CD8-positive, alpha-beta T cell (primary cell): ENCODE measurements at regions of chr14 and their contacts with region 1.

Region 1: GRCh38 chr14:102591889-102592763 is at the start of gene RCOR1:
- DNase-seq: peak; percentile 96 to 99 (median 98)
- ATAC-seq: peak; percentile 89
- H3K4me3 ChIP-seq: peak within 1 kb of the TSS; percentile 59 to 94
- H3K4me3 Mint-ChIP-seq: peak within 1 kb of the TSS; percentile 89
- H3K27ac ChIP-seq: peak within 1 kb of the TSS; percentile 89 to 91
- H3K27ac Mint-ChIP-seq: peak within 1 kb of the TSS; percentile 94
- H3K4me1 ChIP-seq: peaks cover 18% of the 10 kb centered on the region
- H3K4me1 Mint-ChIP-seq: peaks cover 30% of the 10 kb centered on the region
- H3K27me3 ChIP-seq: no peaks in the 10 kb centered on the region
- H3K27me3 Mint-ChIP-seq: no peaks in the 10 kb centered on the region
- CTCF ChIP-seq: no peak
- total RNA-seq, gene RCOR1: 31.7 to 34.4 TPM

Region 2: DNA sequence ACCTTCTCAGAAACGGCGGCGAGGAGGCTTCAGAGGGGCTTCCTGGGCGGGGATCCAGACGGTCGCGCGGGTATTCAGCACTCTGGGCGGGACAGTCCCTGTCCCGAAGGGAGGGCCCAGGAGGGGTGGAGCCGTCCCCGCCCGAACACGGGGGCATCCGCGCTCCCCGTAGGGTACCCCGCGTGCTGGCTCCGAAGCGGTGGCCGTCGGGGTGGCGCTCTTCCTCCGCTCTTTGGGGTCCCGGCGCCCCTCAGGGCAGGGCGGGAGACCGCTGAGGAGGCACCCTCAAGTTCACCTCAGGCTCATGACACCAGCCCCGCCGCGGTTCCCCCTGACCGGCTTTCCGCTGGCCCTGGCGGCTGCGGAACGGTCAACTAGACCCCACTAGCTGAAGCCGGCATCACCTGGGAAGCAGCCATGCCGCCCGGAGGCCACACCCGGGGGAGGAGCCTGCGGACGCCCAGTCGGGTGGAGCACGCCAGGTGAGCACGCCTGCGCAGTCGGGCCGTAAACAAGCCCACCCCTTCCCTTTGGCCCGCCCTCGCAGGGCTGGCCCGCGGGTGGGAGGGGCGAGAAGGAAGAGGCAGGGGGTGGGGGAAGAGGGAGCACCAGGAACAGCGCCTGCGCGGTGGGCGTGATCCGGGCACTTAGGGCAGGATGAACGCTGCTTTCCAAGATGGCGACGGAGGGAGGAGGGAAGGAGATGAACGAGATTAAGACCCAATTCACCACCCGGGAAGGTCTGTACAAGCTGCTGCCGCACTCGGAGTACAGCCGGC is 452.7 kb before region 1 on chr14 and contains the start of gene WDR20:
- CTCF ChIA-PET with region 1: no interaction called
- POLR2A ChIA-PET with region 1: no interaction called
- intact Hi-C with region 1: loop called in 1 of 2 experiments (anchors 10 kb)
- DNase-seq: peak; percentile 98 to 100 (median 99)
- ATAC-seq: peak; percentile 96
- H3K4me3 ChIP-seq: peak within 1 kb of the TSS; percentile 94 to 95
- H3K4me3 Mint-ChIP-seq: peak within 1 kb of the TSS; percentile 99
- H3K27ac ChIP-seq: peak within 1 kb of the TSS; percentile 87 to 91
- H3K27ac Mint-ChIP-seq: peak within 1 kb of the TSS; percentile 98
- H3K4me1 ChIP-seq: peaks cover 25% of the 10 kb centered on the region
- H3K4me1 Mint-ChIP-seq: peaks cover 29% of the 10 kb centered on the region
- H3K27me3 ChIP-seq: no peaks in the 10 kb centered on the region
- H3K27me3 Mint-ChIP-seq: no peaks in the 10 kb centered on the region
- CTCF ChIP-seq: no peak
- total RNA-seq, gene WDR20: 40.8 to 46.3 TPM

Region 3: GRCh38 chr14:102421411-102422053 is 170.6 kb before region 1 on chr14:
- CTCF ChIA-PET with region 1: no interaction called
- POLR2A ChIA-PET with region 1: no interaction called
- intact Hi-C with region 1: no loop called
- DNase-seq: no peak
- ATAC-seq: no peak
- H3K4me3 ChIP-seq: no peak overlapping the region
- H3K4me3 Mint-ChIP-seq: no peak overlapping the region
- H3K27ac ChIP-seq: no peak overlapping the region
- H3K27ac Mint-ChIP-seq: no peak overlapping the region
- H3K4me1 ChIP-seq: no peaks in the 10 kb centered on the region
- H3K4me1 Mint-ChIP-seq: no peaks in the 10 kb centered on the region
- H3K27me3 ChIP-seq: no peaks in the 10 kb centered on the region
- H3K27me3 Mint-ChIP-seq: no peaks in the 10 kb centered on the region
- CTCF ChIP-seq: no peak

Region 4: GRCh38 chr14:102509744-102510615 is 82.1 kb before region 1 on chr14 and contains the start of gene ANKRD9:
- CTCF ChIA-PET with region 1: interaction called, 3 read pairs
- POLR2A ChIA-PET with region 1: no interaction called
- intact Hi-C with region 1: loop called in 1 of 2 experiments (anchors 1 kb)
- DNase-seq: peak; percentile 57 to 91 (median 83)
- ATAC-seq: peak; percentile 86
- H3K4me3 ChIP-seq: peak within 1 kb of the TSS; percentile 78 to 96
- H3K4me3 Mint-ChIP-seq: peak within 1 kb of the TSS; percentile 86
- H3K27ac ChIP-seq: peak within 1 kb of the TSS; percentile 48 to 50
- H3K27ac Mint-ChIP-seq: peak within 1 kb of the TSS; percentile 64
- H3K4me1 ChIP-seq: peaks cover 16% of the 10 kb centered on the region
- H3K4me1 Mint-ChIP-seq: peaks cover 9% of the 10 kb centered on the region
- H3K27me3 ChIP-seq: no peaks in the 10 kb centered on the region
- H3K27me3 Mint-ChIP-seq: no peaks in the 10 kb centered on the region
- CTCF ChIP-seq: no peak
- total RNA-seq, gene ANKRD9: 4.7 to 5.0 TPM

Region 5: DNA sequence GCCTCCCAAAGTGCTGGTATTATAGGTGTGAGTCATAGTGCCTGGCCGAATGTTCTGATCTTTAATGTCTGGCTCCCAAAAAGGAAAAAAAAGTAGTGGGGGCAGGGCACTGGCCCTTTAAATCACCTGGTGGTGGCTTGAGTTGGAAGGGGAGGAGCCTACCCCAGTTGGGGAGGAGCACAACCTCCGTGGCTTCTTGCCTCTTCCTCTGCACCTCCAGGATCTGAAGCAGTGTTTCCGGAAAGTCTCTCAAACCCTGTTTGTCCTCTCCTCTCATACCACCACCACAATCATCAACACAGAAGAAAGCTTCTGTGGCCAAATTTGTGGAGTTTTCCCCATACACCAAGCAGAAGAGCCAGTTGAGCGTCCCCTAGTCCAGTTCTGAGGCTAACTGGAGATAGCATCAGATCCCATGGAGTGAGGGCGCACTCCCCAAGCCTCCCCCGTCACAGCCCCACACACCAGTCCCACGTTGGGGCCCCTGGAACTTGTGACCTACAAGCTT is 24.0 kb before region 1 on chr14:
- CTCF ChIA-PET with region 1: interaction called, 6 read pairs
- POLR2A ChIA-PET with region 1: interaction called, 4 read pairs
- intact Hi-C with region 1: loop called in 1 of 2 experiments (anchors 1 kb)
- DNase-seq: peak in 8 of 9 experiments; percentile 29 to 74 (median 50)
- ATAC-seq: peak; percentile 98
- H3K4me3 ChIP-seq: peak overlapping the region in 1 of 2 experiments; percentile 32
- H3K4me3 Mint-ChIP-seq: peak overlapping the region; percentile 73
- H3K27ac ChIP-seq: peak overlapping the region; percentile 13 to 61
- H3K27ac Mint-ChIP-seq: peak overlapping the region; percentile 88
- H3K4me1 ChIP-seq: peaks cover 19% of the 10 kb centered on the region
- H3K4me1 Mint-ChIP-seq: peaks cover 16% of the 10 kb centered on the region
- H3K27me3 ChIP-seq: no peaks in the 10 kb centered on the region
- H3K27me3 Mint-ChIP-seq: no peaks in the 10 kb centered on the region
- CTCF ChIP-seq: no peak

Region 6: DNA sequence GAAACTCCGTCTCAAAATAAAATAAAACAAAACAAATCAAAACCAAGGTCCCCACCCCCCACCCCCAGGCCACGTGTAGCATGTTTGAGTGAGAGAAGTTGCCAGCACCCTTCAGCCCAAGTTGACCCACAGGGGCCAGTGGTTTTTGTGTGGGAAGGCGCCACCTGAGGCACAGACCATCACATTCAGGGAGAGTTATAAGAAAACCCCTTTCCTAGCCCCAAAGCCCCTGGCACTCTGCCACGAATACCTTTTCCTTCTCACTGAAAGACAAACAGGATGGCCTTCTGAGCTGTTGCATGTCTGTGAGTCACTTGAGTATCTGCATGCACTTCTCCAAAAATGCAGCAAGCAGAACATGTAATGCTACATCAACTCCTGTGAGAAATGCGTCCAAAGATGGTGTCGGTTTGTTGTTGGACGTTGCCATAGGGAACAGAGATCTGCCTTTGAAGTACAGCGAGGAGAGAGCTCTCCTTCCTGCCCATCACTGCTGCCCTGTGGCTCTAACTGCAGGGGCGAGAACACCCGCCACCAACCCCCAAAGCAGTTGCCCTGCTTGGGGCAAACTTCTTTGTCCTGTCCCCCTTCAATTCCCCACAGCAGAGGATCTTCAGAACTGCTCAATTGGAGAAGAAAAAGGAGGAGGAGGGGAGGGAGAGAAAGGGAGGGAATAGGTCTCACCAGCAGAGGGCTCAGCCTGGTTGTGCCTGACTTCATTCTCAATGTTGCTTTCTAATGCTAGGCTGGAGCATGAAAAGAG is 182.4 kb after region 1 on chr14:
- CTCF ChIA-PET with region 1: no interaction called
- POLR2A ChIA-PET with region 1: no interaction called
- intact Hi-C with region 1: loop called in 1 of 2 experiments (anchors 1 kb)
- DNase-seq: peak; percentile 32 to 87 (median 67)
- ATAC-seq: peak; percentile 32
- H3K4me3 ChIP-seq: no peak overlapping the region
- H3K4me3 Mint-ChIP-seq: peak overlapping the region; percentile 57
- H3K27ac ChIP-seq: peak overlapping the region; percentile 46 to 66
- H3K27ac Mint-ChIP-seq: peak overlapping the region; percentile 93
- H3K4me1 ChIP-seq: peaks cover 24% of the 10 kb centered on the region
- H3K4me1 Mint-ChIP-seq: peaks cover 28% of the 10 kb centered on the region
- H3K27me3 ChIP-seq: no peaks in the 10 kb centered on the region
- H3K27me3 Mint-ChIP-seq: no peaks in the 10 kb centered on the region
- CTCF ChIP-seq: peak; percentile 67

Region 7: GRCh38 chr14:103385152-103385993 is 793.2 kb after region 1 on chr14 and contains the start of gene MARK3:
- CTCF ChIA-PET with region 1: no interaction called
- POLR2A ChIA-PET with region 1: no interaction called
- intact Hi-C with region 1: loop called in 1 of 2 experiments (anchors 5 kb)
- DNase-seq: peak; percentile 91 to 98 (median 96)
- ATAC-seq: peak; percentile 88
- H3K4me3 ChIP-seq: peak within 1 kb of the TSS; percentile 72 to 73
- H3K4me3 Mint-ChIP-seq: peak within 1 kb of the TSS; percentile 97
- H3K27ac ChIP-seq: peak within 1 kb of the TSS; percentile 76 to 92
- H3K27ac Mint-ChIP-seq: peak within 1 kb of the TSS; percentile 96
- H3K4me1 ChIP-seq: peaks cover 26% of the 10 kb centered on the region
- H3K4me1 Mint-ChIP-seq: peaks cover 33% of the 10 kb centered on the region
- H3K27me3 ChIP-seq: no peaks in the 10 kb centered on the region
- H3K27me3 Mint-ChIP-seq: no peaks in the 10 kb centered on the region
- CTCF ChIP-seq: peak; percentile 16
- total RNA-seq, gene MARK3: 123 to 124 TPM